Right cardiac atrium (tissue), 5 donors: ENCODE measurements at regions of chr7 and their contacts with region 1.

Region 1: DNA sequence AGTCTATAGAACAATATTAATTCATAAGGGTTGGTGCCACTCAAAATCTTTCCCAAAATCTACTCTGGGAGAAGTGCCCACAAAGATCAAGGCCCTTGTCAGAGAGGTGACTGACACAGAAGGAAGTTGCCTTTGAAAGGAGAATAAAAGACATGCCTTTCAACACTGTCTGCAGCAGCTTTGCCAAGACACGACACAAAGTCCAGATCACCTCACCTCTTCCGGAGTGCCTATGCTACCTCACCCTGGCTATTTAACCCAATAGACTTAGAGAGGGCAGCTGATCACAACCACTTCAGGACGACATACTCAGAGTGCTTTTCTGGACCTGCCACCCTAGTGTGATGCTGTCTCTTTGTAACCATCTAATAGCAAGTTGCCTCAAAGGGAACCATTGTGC is 49.0 kb upstream of the YAE1 start:
- DNase-seq: no peak
- ATAC-seq: no peak
- H3K4me3 ChIP-seq: no peak overlapping the region
- H3K27ac ChIP-seq: no peak overlapping the region
- H3K4me1 ChIP-seq: no peaks in the 10 kb centered on the region
- H3K27me3 ChIP-seq: no peaks in the 10 kb centered on the region

Region 2: GRCh38 chr7:38775506-38776175 is 741.6 kb before region 1 on chr7:
- intact Hi-C with region 1: no loop called
- DNase-seq: no peak
- ATAC-seq: no peak
- H3K4me3 ChIP-seq: no peak overlapping the region
- H3K27ac ChIP-seq: no peak overlapping the region
- H3K4me1 ChIP-seq: no peaks in the 10 kb centered on the region
- H3K27me3 ChIP-seq: no peaks in the 10 kb centered on the region

Region 3: DNA sequence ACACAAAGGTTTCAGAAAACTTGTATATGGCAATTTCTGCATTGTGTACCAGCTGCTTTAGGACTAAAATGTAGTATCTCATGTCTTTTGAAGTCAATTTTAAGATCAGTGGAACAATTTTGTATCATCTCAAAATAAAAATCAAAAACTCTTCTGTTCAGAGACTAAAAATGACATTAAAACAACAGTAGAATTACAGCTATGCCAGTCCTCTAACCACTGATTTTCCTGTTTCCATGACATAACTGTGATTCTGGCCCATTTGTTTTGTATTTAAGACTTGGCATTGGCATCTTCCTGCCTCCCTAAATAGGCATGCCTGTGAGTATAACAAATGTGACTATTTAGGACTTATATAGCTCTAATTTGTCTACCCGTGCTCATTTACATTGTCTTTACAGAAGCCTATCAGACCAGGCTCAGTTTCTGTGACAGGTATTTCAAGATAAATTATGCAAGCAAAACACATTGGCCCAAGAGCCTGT is 579.2 kb before region 1 on chr7:
- intact Hi-C with region 1: loop called (anchors 5 to 10 kb)
- DNase-seq: no peak
- ATAC-seq: no peak
- H3K4me3 ChIP-seq: no peak overlapping the region
- H3K27ac ChIP-seq: no peak overlapping the region
- H3K4me1 ChIP-seq: no peaks in the 10 kb centered on the region
- H3K27me3 ChIP-seq: no peaks in the 10 kb centered on the region